Activated B cell treated with CpG ODN at 0.5 μM for 24 hours (primary cell): ENCODE measurements at regions of chr1 and their contacts with region 1.

Region 1: DNA sequence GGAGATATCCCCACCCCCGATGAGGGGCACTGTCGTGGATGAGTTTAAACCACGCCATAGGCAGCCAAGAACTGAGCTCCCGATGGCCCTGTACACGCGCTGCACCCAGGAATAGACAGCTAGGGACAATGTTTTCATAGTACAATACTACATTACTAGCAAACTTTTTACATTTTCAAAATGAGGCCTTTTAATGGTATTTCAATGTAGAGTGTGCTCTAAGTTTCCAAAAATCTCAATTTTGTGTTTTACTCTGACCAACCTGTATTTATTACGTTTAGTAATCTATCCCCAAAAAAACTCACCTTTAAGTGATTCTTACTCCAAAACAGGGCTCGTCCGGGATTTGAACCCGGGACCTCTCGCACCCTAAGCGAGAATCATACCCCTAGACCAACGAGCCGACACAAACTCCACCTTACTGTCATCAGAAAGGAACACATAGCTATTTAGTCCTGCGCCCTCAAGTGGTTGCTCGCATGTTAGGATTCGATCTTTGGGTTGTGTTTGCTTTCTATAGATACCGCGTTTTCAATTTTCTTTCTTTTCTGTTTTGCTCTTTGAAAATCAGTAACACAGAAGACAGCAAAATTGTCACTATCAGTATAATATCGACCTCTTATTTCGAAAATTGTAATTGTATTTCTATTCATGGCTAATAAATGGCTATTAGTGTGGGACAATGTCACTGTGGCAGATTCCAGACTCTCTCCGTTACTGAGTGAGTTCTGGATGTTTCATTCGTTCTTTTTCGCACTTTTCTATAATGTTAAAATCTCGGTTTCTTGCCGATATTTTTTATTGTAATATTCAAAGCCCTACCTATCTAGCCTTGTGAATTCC is 6.4 kb upstream of the MPZL1 start:
- DNase-seq: peak; percentile 69
- ATAC-seq: peak; percentile 51
- H3K4me3 Mint-ChIP-seq: peak overlapping the region; percentile 85
- H3K27ac Mint-ChIP-seq: peak overlapping the region; percentile 98
- H3K4me1 Mint-ChIP-seq: peaks cover 68% of the 10 kb centered on the region
- H3K27me3 Mint-ChIP-seq: peaks cover 7% of the 10 kb centered on the region
- CTCF ChIP-seq: peak; percentile 68

Region 2: GRCh38 chr1:167454894-167455785 is 260.2 kb before region 1 on chr1:
- CTCF ChIA-PET with region 1: interaction called, 3 read pairs
- POLR2A ChIA-PET with region 1: no interaction called
- intact Hi-C with region 1: loop called (anchors 10 kb)
- DNase-seq: peak; percentile 60
- ATAC-seq: peak; percentile 76
- H3K4me3 Mint-ChIP-seq: peak overlapping the region; percentile 78
- H3K27ac Mint-ChIP-seq: no peak overlapping the region
- H3K4me1 Mint-ChIP-seq: peaks cover 18% of the 10 kb centered on the region
- H3K27me3 Mint-ChIP-seq: peaks cover 4% of the 10 kb centered on the region
- CTCF ChIP-seq: no peak

Region 3: GRCh38 chr1:167681451-167682098 is 33.8 kb before region 1 on chr1:
- CTCF ChIA-PET with region 1: no interaction called
- POLR2A ChIA-PET with region 1: no interaction called
- intact Hi-C with region 1: no loop called
- DNase-seq: no peak
- ATAC-seq: no peak
- H3K4me3 Mint-ChIP-seq: peak overlapping the region; percentile 25
- H3K27ac Mint-ChIP-seq: no peak overlapping the region
- H3K4me1 Mint-ChIP-seq: peaks cover 16% of the 10 kb centered on the region
- H3K27me3 Mint-ChIP-seq: no peaks in the 10 kb centered on the region
- CTCF ChIP-seq: no peak

Region 4: GRCh38 chr1:167697667-167698141 is 17.7 kb before region 1 on chr1:
- CTCF ChIA-PET with region 1: interaction called, 3 read pairs
- POLR2A ChIA-PET with region 1: interaction called, 12 read pairs
- intact Hi-C with region 1: no loop called
- DNase-seq: no peak
- ATAC-seq: peak; percentile 21
- H3K4me3 Mint-ChIP-seq: no peak overlapping the region
- H3K27ac Mint-ChIP-seq: peak overlapping the region; percentile 61
- H3K4me1 Mint-ChIP-seq: peaks cover 22% of the 10 kb centered on the region
- H3K27me3 Mint-ChIP-seq: no peaks in the 10 kb centered on the region
- CTCF ChIP-seq: no peak

Region 5: GRCh38 chr1:167774710-167775109 is 59.3 kb after region 1 on chr1:
- CTCF ChIA-PET with region 1: no interaction called
- POLR2A ChIA-PET with region 1: no interaction called
- intact Hi-C with region 1: no loop called
- DNase-seq: no peak
- ATAC-seq: no peak
- H3K4me3 Mint-ChIP-seq: no peak overlapping the region
- H3K27ac Mint-ChIP-seq: no peak overlapping the region
- H3K4me1 Mint-ChIP-seq: no peaks in the 10 kb centered on the region
- H3K27me3 Mint-ChIP-seq: no peaks in the 10 kb centered on the region
- CTCF ChIP-seq: no peak

Region 6: GRCh38 chr1:167803358-167804207 is 88.2 kb after region 1 on chr1:
- CTCF ChIA-PET with region 1: no interaction called
- POLR2A ChIA-PET with region 1: no interaction called
- intact Hi-C with region 1: loop called (anchors 1 kb)
- DNase-seq: peak; percentile 79
- ATAC-seq: peak; percentile 100
- H3K4me3 Mint-ChIP-seq: peak overlapping the region; percentile 48
- H3K27ac Mint-ChIP-seq: no peak overlapping the region
- H3K4me1 Mint-ChIP-seq: peaks cover 22% of the 10 kb centered on the region
- H3K27me3 Mint-ChIP-seq: no peaks in the 10 kb centered on the region
- CTCF ChIP-seq: peak; percentile 54

Region 7: DNA sequence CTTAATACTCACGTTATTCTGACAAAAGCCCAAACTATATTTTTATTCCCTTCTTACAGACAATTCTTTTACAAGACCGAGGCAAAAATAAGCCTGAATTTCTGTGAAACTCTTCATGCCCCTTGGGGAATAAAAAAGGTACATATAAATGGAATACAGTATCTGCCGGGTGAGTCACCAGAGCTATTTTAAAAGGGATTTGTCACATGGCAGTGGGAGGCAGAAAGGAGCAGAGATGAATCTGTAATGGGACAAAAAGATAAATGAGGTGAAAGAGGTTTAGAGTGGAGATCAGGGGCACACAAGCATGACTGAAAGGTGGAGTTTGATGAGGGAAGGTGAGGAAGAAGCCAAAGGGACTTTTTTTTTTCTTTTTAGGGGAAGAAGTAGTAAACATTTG is 869.8 kb after region 1 on chr1:
- CTCF ChIA-PET with region 1: no interaction called
- POLR2A ChIA-PET with region 1: no interaction called
- intact Hi-C with region 1: no loop called
- DNase-seq: no peak
- ATAC-seq: no peak
- H3K4me3 Mint-ChIP-seq: no peak overlapping the region
- H3K27ac Mint-ChIP-seq: no peak overlapping the region
- H3K4me1 Mint-ChIP-seq: no peaks in the 10 kb centered on the region
- H3K27me3 Mint-ChIP-seq: no peaks in the 10 kb centered on the region
- CTCF ChIP-seq: no peak

Region 8: DNA sequence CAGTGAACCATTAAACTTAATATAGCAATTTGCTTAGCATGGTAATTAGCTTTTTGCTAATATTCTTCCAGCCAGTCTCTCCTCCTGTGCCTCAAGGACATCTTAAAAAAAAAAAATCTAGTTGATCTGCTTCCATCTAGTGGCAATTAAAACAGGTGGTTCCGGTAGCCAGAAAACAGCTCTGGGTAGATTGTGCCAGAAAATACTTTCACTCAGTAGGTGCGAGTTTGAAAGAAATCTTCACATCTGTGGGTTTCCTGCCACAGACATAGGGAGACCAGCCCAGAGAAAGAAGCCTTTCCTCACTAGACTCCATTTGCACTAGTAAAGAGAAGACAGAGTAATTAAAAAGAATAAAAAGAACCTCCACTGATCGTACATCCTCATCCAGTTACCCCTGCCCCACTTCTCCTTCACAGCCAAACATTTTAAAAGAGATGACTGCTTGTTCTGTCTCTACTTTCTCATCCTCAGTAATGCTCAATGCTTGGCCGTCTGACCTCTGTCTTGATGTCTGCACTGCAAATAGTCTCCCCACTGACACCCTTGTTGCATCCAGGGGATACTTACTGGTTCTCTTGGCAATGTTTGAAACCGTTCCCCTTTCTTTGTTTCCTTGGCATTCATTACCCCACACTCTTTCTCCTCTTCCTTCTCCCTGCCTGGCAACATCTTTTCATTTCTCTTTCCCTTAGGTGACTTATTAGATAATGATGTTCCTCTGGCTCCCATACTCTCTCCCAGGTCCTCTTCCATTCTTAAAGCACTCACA is 1979.1 kb after region 1 on chr1:
- CTCF ChIA-PET with region 1: no interaction called
- POLR2A ChIA-PET with region 1: no interaction called
- intact Hi-C with region 1: loop called (anchors 10 kb)
- DNase-seq: no peak
- ATAC-seq: peak; percentile 9
- H3K4me3 Mint-ChIP-seq: peak overlapping the region; percentile 62
- H3K27ac Mint-ChIP-seq: peak overlapping the region; percentile 90
- H3K4me1 Mint-ChIP-seq: peaks cover 97% of the 10 kb centered on the region
- H3K27me3 Mint-ChIP-seq: no peaks in the 10 kb centered on the region
- CTCF ChIP-seq: no peak